ENCODE measurements at regions of chr2 and their contacts with region 1.

Region 1: DNA sequence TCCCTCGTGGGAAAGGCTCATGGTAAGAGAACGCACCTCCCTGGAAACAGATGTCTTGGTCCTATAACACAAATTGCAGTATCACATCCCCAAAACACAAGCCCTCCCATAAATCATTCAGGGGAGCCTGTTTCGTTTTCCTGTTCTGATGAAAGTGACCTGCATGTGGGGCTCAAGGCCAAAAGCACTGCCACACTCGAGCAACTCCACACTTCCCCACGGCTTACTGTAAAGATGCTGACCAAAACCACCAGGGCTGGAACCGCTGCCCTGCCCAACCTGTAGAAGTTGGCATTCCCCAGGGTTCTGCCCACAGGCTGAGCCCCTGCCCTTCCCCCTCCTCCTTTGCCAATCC is 139.7 kb downstream of the BCL11A start:
- DNase-seq: peak; percentile 79
- ATAC-seq: peak; percentile 74
- H3K4me3 ChIP-seq: peak overlapping the region in 1 of 5 experiments; percentile 8
- H3K4me3 Mint-ChIP-seq: peak overlapping the region; percentile 20
- H3K27ac ChIP-seq: peak overlapping the region; percentile 79 to 81
- H3K27ac Mint-ChIP-seq: peak overlapping the region; percentile 94
- H3K4me1 ChIP-seq: peaks cover 73 to 76% of the 10 kb centered on the region in 2 donors
- H3K4me1 Mint-ChIP-seq: peaks cover 84% of the 10 kb centered on the region
- H3K27me3 ChIP-seq: no peaks in the 10 kb centered on the region
- H3K27me3 Mint-ChIP-seq: no peaks in the 10 kb centered on the region
- CTCF ChIP-seq: no peak

Region 2: DNA sequence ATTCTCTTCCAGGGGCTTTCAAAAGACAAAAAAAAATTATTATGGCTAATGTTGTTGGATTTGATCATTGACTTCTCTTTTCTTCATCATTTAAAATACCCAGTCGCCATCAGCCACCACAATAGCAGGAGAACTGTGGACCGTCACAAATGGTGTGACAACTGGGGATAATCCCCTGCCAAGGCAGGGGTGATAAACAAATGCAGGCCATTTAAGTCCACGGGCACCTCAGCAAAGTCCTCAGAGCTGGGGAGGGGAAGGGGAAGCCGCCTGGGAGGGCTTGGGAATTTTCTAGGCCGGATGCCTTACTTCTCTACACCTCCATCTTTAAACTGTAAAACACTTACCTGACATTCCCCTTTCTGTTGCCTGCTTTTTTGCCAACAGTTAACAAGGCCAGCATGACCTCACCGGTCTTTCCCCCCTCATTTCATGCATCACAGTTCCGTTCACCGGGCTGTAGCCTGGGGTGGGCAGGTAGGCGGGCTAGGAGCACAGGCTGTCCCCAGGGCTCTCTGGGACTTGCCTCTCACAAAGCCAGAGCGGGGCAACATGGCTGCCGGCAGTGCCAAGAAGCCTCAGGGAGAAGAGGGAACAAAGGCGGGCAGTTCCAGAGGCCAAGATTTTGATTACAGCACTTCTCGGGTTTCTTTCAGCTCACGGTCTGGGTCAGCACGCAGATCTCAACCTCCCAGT is 680.8 kb before region 1 on chr2:
- CTCF ChIA-PET with region 1: no interaction called
- POLR2A ChIA-PET with region 1: no interaction called
- intact Hi-C with region 1: no loop called
- DNase-seq: peak; percentile 9
- ATAC-seq: no peak
- H3K4me3 ChIP-seq: no peak overlapping the region
- H3K4me3 Mint-ChIP-seq: no peak overlapping the region
- H3K27ac ChIP-seq: no peak overlapping the region
- H3K27ac Mint-ChIP-seq: no peak overlapping the region
- H3K4me1 ChIP-seq: no peaks in the 10 kb centered on the region
- H3K4me1 Mint-ChIP-seq: peaks cover 1% of the 10 kb centered on the region
- H3K27me3 ChIP-seq: peaks cover 0 to 3% (median 0%) of the 10 kb centered on the region in 4 experiments
- H3K27me3 Mint-ChIP-seq: no peaks in the 10 kb centered on the region
- CTCF ChIP-seq: no peak

Region 3: DNA sequence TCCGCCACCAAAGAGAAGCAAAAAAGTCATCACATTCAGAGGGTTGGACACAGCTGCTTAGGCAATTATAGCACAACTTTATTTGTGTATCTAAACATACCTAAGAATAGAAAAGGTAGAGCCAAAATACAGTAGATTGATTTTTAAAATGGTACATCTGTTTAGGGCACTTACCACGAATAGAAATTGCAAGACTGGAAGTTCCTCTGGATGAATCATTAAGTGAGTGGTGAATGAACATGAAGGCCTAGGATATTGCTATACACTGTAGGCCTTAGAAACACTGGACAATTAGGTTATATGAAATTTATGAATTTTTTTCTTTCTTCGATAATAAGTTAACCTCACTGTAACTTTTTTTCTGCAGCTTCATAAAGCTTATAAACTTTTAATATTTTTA is 547.4 kb before region 1 on chr2:
- CTCF ChIA-PET with region 1: no interaction called
- POLR2A ChIA-PET with region 1: no interaction called
- intact Hi-C with region 1: no loop called
- DNase-seq: no peak
- ATAC-seq: no peak
- H3K4me3 ChIP-seq: no peak overlapping the region
- H3K4me3 Mint-ChIP-seq: no peak overlapping the region
- H3K27ac ChIP-seq: no peak overlapping the region
- H3K27ac Mint-ChIP-seq: no peak overlapping the region
- H3K4me1 ChIP-seq: no peaks in the 10 kb centered on the region
- H3K4me1 Mint-ChIP-seq: no peaks in the 10 kb centered on the region
- H3K27me3 ChIP-seq: no peaks in the 10 kb centered on the region
- H3K27me3 Mint-ChIP-seq: no peaks in the 10 kb centered on the region
- CTCF ChIP-seq: no peak

Region 4: DNA sequence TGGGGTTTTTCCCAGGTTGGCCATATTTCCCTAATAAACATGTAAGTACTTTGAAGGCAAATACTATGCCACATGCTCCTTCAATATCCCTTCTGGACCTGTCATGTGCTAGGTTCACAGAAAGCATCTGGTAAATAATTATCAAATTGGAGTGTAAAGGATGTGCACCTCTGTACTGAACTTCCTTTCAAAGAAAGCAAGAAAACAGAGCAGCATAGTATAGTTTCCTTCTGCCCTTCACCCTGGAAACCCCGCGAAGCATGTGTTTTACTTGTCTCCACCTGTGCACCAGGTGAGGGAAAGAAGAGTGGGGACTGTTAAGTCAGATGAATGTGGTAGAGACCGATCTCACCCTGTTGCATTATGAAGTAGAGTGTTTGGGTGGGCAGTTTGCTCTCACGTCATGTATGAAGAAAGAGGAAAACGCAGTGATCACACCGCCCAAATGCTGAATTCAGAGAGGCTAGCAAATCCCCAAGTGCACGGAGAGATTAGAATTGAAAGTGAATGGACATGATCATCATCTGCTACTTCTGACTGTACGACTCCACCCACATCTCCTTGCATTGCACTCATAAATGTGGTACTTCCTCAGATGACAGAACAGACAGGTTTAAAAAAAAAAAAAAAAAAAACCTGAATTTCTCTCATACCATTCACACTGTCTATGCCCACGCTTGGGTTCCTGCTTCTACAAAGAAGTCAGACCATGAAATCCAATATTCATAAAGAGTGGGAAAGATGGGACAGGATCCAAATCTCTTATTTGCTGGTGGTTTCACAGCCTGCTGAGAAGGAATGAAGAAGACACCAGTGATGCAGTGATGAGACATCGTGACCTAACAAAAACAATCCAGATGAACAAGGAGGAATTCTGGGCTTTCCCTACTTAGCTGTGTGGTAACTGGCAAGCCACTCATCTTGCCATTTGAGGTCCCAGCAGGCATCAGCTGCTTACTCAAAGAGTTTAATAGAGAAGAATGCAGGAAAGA is 309.0 kb before region 1 on chr2:
- CTCF ChIA-PET with region 1: no interaction called
- POLR2A ChIA-PET with region 1: no interaction called
- intact Hi-C with region 1: no loop called
- DNase-seq: peak; percentile 64
- ATAC-seq: peak; percentile 92
- H3K4me3 ChIP-seq: peak overlapping the region in 4 of 5 experiments; percentile 23 to 58 (median 52)
- H3K4me3 Mint-ChIP-seq: peak overlapping the region; percentile 87
- H3K27ac ChIP-seq: peak overlapping the region; percentile 19 to 51
- H3K27ac Mint-ChIP-seq: peak overlapping the region; percentile 57
- H3K4me1 ChIP-seq: peaks cover 18 to 25% of the 10 kb centered on the region in 2 donors
- H3K4me1 Mint-ChIP-seq: peaks cover 32% of the 10 kb centered on the region
- H3K27me3 ChIP-seq: no peaks in the 10 kb centered on the region
- H3K27me3 Mint-ChIP-seq: no peaks in the 10 kb centered on the region
- CTCF ChIP-seq: no peak

Region 5: GRCh38 chr2:60366135-60366712 is 47.6 kb before region 1 on chr2:
- CTCF ChIA-PET with region 1: no interaction called
- POLR2A ChIA-PET with region 1: no interaction called
- intact Hi-C with region 1: loop called (anchors 5 kb)
- DNase-seq: peak; percentile 60
- ATAC-seq: peak; percentile 50
- H3K4me3 ChIP-seq: peak overlapping the region in 1 of 5 experiments; percentile 41
- H3K4me3 Mint-ChIP-seq: peak overlapping the region; percentile 53
- H3K27ac ChIP-seq: peak overlapping the region; percentile 60 to 81
- H3K27ac Mint-ChIP-seq: peak overlapping the region; percentile 89
- H3K4me1 ChIP-seq: peaks cover 92 to 96% of the 10 kb centered on the region in 2 donors
- H3K4me1 Mint-ChIP-seq: peaks cover 96% of the 10 kb centered on the region
- H3K27me3 ChIP-seq: no peaks in the 10 kb centered on the region
- H3K27me3 Mint-ChIP-seq: no peaks in the 10 kb centered on the region
- CTCF ChIP-seq: no peak

Region 6: GRCh38 chr2:60391649-60392375 is 22.0 kb before region 1 on chr2:
- CTCF ChIA-PET with region 1: interaction called, 3 read pairs
- POLR2A ChIA-PET with region 1: no interaction called
- intact Hi-C with region 1: loop called (anchors 2 kb)
- DNase-seq: no peak
- ATAC-seq: peak; percentile 9
- H3K4me3 ChIP-seq: no peak overlapping the region
- H3K4me3 Mint-ChIP-seq: peak overlapping the region; percentile 81
- H3K27ac ChIP-seq: peak overlapping the region; percentile 53 to 72
- H3K27ac Mint-ChIP-seq: peak overlapping the region; percentile 88
- H3K4me1 ChIP-seq: peaks cover 36 to 42% of the 10 kb centered on the region in 2 donors
- H3K4me1 Mint-ChIP-seq: peaks cover 71% of the 10 kb centered on the region
- H3K27me3 ChIP-seq: no peaks in the 10 kb centered on the region
- H3K27me3 Mint-ChIP-seq: no peaks in the 10 kb centered on the region
- CTCF ChIP-seq: no peak

Region 7: GRCh38 chr2:60602828-60603532 is 189.2 kb after region 1 on chr2:
- CTCF ChIA-PET with region 1: no interaction called
- POLR2A ChIA-PET with region 1: no interaction called
- intact Hi-C with region 1: no loop called
- DNase-seq: no peak
- ATAC-seq: no peak
- H3K4me3 ChIP-seq: no peak overlapping the region
- H3K4me3 Mint-ChIP-seq: no peak overlapping the region
- H3K27ac ChIP-seq: no peak overlapping the region
- H3K27ac Mint-ChIP-seq: no peak overlapping the region
- H3K4me1 ChIP-seq: no peaks in the 10 kb centered on the region
- H3K4me1 Mint-ChIP-seq: peaks cover 6% of the 10 kb centered on the region
- H3K27me3 ChIP-seq: no peaks in the 10 kb centered on the region
- H3K27me3 Mint-ChIP-seq: peaks cover 5% of the 10 kb centered on the region
- CTCF ChIP-seq: no peak